Right ventricle myocardium superior (tissue), 1 donor: ENCODE measurements at regions of chr2 and their contacts with region 1.

Region 1: DNA sequence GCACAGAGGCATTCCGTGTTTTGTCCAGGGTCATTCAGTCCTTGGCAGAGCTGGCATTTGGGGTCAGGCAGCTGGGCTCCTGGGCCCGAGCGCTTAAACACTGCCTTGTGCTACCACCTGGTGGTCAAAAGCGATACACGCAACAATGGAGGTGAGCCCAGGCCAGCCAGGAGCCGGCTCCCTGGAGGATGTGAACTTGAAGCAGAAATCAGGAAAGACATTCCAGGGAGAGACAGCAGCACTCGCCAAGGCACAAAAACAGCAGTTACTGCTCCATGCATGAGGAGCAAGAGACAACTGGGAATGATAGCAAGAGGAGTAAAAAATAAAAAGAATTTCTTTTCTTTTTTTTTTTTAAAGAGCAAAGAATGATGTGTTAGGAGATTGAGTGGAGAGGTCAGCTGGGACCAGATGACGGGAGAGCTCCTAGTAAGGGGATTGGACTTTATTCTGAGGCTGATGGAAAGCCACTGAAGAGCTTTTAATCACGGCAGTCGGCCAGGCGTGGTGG is 20.7 kb downstream of the SCYGR8 start:
- DNase-seq: peak; percentile 85
- ATAC-seq: peak; percentile 99

Region 2: DNA sequence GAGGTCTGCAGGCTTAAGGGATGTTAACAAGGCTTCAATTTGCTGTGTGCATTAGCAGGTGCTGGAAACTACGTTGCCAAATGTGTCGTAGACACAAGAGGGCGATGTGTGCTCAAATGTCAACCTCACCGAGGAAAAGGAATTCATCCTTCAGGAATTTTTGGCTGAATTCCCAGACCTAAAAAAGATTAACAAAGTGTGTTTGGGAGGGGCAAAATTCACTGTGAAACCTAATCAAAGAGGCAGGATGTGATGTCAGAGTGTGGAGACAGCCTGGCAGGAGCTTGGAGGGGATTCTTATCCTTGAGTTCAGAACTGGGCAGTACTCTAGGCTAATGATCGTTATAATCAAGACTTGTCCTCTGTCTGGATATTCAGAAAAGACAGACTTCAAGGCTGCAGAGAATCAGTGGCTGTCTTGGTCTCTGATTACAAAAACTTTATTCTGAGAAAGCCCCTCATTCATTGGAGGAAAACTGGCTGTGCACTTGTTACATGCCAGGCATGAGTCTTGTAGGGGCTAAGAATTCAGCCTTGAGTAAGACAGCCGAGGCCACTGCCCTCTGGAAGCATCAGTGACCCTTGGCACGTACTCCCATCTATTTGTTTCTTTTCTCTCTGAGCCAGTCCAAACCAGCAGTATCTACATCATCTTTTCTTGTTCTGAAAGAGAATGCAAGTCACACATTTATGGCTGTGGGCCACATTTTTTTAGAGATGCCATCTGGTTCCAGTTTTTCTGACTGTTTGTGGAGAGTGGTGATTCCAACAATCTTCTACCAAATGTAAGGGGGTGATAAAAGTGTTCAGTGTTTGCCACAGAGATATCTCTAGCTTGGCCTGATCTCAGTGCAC is 360.0 kb before region 1 on chr2:
- intact Hi-C with region 1: loop called (anchors 5 kb)
- DNase-seq: peak; percentile 67
- ATAC-seq: peak; percentile 87

Region 3: GRCh38 chr2:227659246-227659645 is 107.2 kb before region 1 on chr2:
- intact Hi-C with region 1: loop called (anchors 2 kb)
- DNase-seq: no peak
- ATAC-seq: no peak